ENCODE measurements at regions of chr9 and their contacts with region 1.

Region 1: DNA sequence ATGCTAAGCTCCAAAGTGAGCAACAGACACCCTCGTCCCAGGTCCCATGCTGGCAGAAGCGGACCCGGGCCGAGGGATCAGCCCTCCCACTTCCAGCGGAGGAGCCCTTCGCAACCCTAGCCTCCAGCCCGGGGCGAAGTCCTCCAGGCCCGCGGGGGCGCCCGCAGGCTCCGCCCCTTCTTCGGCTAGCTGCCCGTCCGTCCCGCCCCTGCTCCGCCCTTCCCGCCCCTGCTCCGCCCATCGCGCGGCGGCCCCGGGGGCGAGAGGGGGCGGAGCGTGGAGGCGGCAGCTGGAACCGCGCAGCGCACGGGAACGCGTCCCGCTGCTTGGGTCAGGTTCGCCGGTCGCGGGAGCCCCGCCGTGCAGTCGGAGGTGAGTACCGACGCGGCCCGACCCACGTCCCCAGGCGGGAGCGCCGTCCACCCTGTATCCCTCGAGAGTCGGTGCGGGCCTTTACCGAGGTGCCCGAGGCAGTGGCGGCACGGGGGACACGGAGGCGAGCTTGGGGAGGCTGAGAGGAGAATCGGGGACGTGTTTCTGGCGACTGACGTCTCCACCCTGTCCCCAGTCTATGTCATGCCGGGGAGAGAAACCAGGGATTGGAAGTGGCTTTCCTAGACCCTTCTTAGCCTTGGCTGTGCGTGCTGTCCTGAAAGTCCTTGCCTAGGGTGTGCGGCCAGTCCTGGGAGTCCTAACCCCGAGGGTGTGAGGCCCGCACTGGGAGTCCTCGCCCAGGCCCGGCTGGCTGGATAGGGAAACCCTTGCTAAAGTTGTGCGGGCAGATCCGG is at the start of gene ACO1:
- DNase-seq: peak; percentile 95
- ATAC-seq: peak; percentile 97
- total RNA-seq, gene ACO1: 26.3 TPM

Region 2: DNA sequence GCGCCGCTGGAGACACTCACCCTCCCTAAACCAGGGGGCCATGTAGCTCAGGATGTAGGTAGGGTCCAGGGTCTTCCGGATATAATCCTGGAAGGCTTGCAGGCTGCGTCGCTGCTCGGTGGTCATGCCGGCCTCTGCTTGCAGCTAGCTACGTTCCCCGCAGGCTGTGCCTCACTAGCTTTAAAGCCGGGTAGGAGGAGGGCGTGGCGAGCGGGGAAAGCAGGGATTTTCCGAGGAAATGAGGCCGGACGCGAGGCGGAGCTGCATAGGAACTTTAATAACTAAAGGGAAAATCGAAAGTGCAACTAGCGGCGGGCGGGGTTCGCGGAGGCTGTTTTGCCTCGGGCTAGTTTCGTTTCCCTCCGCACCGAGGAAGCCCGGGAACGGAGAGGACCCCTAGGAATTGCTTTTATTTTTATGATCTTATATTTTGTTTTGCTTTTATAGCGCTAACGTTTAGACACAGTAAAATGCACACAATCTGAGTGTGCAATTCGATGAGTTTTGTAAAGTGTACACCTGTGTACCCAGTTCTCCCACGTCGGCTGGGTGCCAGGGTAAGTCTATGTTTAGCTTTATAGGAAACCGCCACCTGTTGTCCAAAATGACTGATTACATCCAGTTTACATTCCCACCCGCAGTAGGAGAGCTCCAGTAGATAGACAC is 141.6 kb after region 1 on chr9 and contains the start of gene RIGI:
- intact Hi-C with region 1: loop called (anchors 10 kb)
- DNase-seq: peak; percentile 97
- ATAC-seq: peak; percentile 97
- total RNA-seq, gene RIGI: 14.3 TPM

Region 3: DNA sequence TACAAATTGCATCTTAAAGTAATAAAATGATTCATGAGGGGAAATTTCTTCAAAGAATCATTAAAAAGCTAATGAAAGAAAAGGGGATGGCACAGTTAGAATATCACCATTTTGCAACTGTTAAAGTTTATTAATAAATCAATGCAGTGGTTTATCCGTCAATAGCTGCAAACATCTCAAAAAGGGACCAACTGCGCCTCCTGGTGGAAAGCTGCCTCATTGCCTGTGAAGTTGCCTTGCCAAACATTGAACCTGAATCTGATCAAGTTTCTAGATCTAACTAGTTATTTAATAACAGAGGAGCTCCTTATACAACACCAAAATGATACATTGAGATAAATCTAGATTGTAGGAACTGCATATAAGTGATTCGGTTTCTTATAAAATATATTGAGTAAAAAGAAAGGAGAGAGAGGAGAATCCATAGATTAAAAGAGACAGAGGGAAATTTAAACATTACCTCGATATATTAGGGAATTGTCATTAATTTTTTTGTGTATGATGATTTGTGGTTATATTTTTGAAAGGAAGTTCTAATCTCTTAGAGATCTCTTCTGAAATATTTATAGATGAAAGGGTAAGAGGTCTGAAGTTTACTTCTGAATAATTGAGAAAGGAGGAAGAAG is 195.3 kb after region 1 on chr9:
- intact Hi-C with region 1: loop called (anchors 5 kb)
- DNase-seq: peak; percentile 88
- ATAC-seq: peak; percentile 51

Region 4: GRCh38 chr9:32603914-32604741 is 219.6 kb after region 1 on chr9:
- intact Hi-C with region 1: no loop called
- DNase-seq: no peak
- ATAC-seq: no peak

Region 5: GRCh38 chr9:32992595-32993238 is 608.2 kb after region 1 on chr9:
- intact Hi-C with region 1: loop called (anchors 5 kb)
- DNase-seq: no peak
- ATAC-seq: no peak

Region 6: GRCh38 chr9:33159760-33160127 is 775.2 kb after region 1 on chr9:
- intact Hi-C with region 1: loop called (anchors 10 kb)
- DNase-seq: peak; percentile 68
- ATAC-seq: peak; percentile 30

Measured in sciatic nerve (tissue), 2 donors.